ENCODE measurements at regions of chr12 and their contacts with region 1.

Region 1: GRCh38 chr12:41932470-41932991 is 212.1 kb downstream of the GXYLT1 start:
- H3K4me3 ChIP-seq: peak overlapping the region; percentile 16
- H3K27ac ChIP-seq: no peak overlapping the region; the same call in 1 of the 2 replicates
- H3K4me1 ChIP-seq: no peaks in the 10 kb centered on the region
- CTCF ChIP-seq: peak; percentile 55

Region 2: GRCh38 chr12:42990387-42990786 is 1057.9 kb after region 1 on chr12:
- CTCF ChIA-PET with region 1: no interaction called
- POLR2A ChIA-PET with region 1: interaction called, 10 read pairs
- H3K4me3 ChIP-seq: no peak overlapping the region
- H3K27ac ChIP-seq: no peak overlapping the region
- H3K4me1 ChIP-seq: peaks cover 8% of the 10 kb centered on the region; the same call in 1 of the 2 replicates
- CTCF ChIP-seq: no peak

Measured in HEK293 (cell line).